ENCODE measurements at regions of chr3 and their contacts with region 1.

Region 1: DNA sequence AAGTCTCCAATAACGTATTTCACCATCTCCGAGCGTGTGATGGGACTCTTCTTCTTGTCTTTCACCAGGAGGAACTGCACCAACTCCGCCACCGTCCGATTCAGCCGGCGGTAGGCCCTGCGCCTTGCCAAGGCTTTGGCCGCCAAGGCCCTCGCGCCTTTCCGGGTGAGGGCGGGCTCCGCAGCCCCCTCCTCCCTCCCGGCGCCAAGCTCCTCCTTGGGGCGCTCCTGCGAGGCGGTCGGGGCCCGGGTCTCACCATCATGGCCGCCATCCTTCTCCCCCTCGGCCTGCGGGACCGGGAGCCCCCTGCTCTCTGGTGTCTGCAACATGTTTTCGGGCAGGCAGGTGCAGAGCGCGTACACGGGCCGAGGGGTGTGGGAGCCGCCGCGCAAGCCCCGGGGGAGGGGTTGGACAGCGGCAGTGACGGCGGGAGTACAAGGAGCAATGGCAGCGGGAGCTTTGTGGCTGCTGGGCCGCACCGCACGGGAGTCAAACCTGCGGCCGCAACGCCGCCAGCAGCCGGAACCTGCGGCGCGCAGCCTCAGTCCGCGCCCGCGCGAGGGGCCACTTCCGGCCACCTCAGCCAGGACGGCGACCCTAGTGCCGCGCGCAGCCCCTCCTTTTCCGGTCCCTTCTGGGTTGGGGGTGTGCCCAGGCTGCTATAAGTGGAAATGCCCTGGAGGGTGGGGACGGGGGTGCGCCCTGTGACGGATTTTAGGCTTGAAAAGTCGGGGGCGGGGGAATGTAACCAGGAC is at the start of gene MAGEF1:
- DNase-seq: peak; percentile 94
- H3K4me3 Mint-ChIP-seq: peak within 1 kb of the TSS; percentile 94
- H3K27ac Mint-ChIP-seq: peak within 1 kb of the TSS; percentile 86
- H3K4me1 Mint-ChIP-seq: peaks cover 29% of the 10 kb centered on the region
- H3K27me3 Mint-ChIP-seq: peaks cover 15% of the 10 kb centered on the region
- total RNA-seq, gene MAGEF1: 14.3 and 15.0 TPM in 2 replicates

Region 2: DNA sequence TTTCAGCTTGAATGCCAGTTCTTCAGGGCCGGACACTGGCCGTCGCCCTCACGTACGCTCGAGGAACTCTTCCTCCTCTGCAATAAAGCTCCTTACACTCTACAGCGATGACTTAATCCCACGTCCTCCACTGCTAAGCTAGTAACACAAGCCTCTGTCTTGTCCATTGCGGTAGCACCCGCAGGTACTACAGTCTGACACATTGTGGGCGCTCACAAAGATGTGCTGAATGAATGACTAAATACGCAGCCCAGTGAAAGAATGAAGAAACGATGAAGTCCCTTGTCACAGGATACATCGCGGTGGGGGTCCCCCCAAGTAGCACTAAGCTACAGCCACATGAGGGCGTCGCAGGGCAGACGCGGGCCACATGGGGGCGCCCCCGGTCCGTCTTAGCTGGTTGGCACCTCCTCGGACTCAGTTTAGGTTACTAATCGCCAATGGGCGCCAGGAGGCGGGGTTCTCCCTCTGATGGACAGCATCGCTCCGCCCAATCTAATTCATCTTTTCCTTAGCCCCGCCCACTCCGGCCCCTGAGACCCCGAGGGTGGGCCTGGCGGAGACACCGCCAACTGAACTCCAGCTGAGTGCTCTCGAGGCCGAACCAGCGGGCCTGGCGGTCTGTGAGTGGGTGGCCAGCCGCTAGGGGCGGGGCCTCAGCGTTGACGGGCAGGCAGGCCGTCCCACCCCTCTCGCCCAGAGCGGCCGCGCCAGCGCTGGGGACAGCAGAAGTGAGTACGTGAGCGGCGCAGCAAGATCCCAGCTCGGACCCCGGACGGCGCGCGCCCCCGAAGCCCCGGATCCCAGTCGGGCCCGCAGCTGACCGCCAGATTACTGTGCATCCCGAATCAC is 150.4 kb before region 1 on chr3 and contains the start of gene EPHB3:
- intact Hi-C with region 1: loop called (anchors 1 kb)
- DNase-seq: peak; percentile 96
- H3K4me3 Mint-ChIP-seq: peak within 1 kb of the TSS; percentile 77
- H3K27ac Mint-ChIP-seq: peak within 1 kb of the TSS; percentile 10
- H3K4me1 Mint-ChIP-seq: peaks cover 21% of the 10 kb centered on the region
- H3K27me3 Mint-ChIP-seq: peaks cover 55% of the 10 kb centered on the region
- total RNA-seq, gene EPHB3: 0.05 TPM in 1 of 2 replicates, not detected in the other

Region 3: GRCh38 chr3:184604039-184604601 is 107.5 kb before region 1 on chr3:
- intact Hi-C with region 1: no loop called
- DNase-seq: no peak
- H3K4me3 Mint-ChIP-seq: peak overlapping the region; percentile 40
- H3K27ac Mint-ChIP-seq: no peak overlapping the region
- H3K4me1 Mint-ChIP-seq: peaks cover 4% of the 10 kb centered on the region
- H3K27me3 Mint-ChIP-seq: peaks cover 64% of the 10 kb centered on the region

Region 4: GRCh38 chr3:184636741-184637316 is 74.8 kb before region 1 on chr3:
- intact Hi-C with region 1: loop called (anchors 1 kb)
- DNase-seq: peak; percentile 79
- H3K4me3 Mint-ChIP-seq: no peak overlapping the region
- H3K27ac Mint-ChIP-seq: no peak overlapping the region
- H3K4me1 Mint-ChIP-seq: peaks cover 5% of the 10 kb centered on the region
- H3K27me3 Mint-ChIP-seq: peaks cover 2% of the 10 kb centered on the region

Region 5: DNA sequence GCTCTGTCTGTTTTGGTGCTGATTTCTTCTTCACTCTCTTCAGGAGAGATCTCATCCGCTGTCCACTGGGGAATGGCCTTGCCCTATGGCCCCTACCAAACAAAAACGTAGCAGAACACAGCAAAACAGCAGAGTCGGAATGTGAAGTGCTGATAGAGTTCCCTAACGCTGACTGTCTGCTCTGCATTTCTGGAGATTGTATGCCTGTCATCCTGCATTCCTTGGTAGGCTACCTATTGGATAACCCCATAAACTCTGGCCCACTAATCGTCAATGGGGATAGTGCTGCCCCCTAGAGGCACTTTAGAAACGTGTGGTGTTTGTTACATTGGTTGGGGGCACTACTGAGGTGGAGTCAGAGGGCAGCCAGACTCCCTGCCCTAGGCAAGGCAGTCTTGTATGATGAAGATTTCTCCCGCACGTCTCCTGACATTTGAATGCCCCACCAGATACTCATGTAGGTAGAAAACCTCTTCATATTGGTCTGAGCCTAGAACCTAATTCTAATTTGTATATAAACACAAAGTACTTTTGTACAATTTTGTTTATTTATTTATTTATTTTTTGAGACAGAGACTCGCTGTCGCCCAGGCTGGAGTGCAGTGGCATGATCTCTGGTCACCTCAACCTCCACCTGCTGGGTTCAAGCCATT is 15.8 kb after region 1 on chr3:
- intact Hi-C with region 1: loop called (anchors 1 kb)
- DNase-seq: peak; percentile 82
- H3K4me3 Mint-ChIP-seq: no peak overlapping the region
- H3K27ac Mint-ChIP-seq: no peak overlapping the region
- H3K4me1 Mint-ChIP-seq: no peaks in the 10 kb centered on the region
- H3K27me3 Mint-ChIP-seq: peaks cover 36% of the 10 kb centered on the region

Region 6: GRCh38 chr3:184811999-184812661 is 100.5 kb after region 1 on chr3 and contains the start of gene VPS8:
- intact Hi-C with region 1: loop called (anchors 5 kb)
- DNase-seq: peak; percentile 99
- H3K4me3 Mint-ChIP-seq: peak within 1 kb of the TSS; percentile 97
- H3K27ac Mint-ChIP-seq: peak within 1 kb of the TSS; percentile 97
- H3K4me1 Mint-ChIP-seq: peaks cover 57% of the 10 kb centered on the region
- H3K27me3 Mint-ChIP-seq: peaks cover 3% of the 10 kb centered on the region
- total RNA-seq, gene VPS8: 33.6 and 33.9 TPM in 2 replicates

Measured in activated CD4-positive, alpha-beta T cell treated with anti-CD3 and anti-CD28 coated beads, Interleukin-2, amount 10 ng/mL, durations not matched to agents 24 days and 14 days (primary cell).